Gastrocnemius medialis (tissue), 4 donors: ENCODE measurements at regions of chr18 and their contacts with region 1.

Region 1: GRCh38 chr18:49094979-49095632 is 144.3 kb upstream of the SMAD7 start:
- DNase-seq: no peak
- ATAC-seq: no peak
- H3K4me3 ChIP-seq: no peak overlapping the region
- H3K27ac ChIP-seq: no peak overlapping the region
- H3K4me1 ChIP-seq: no peaks in the 10 kb centered on the region
- H3K27me3 ChIP-seq: no peaks in the 10 kb centered on the region
- CTCF ChIP-seq: no peak
- POLR2A ChIP-seq: no peak

Region 2: GRCh38 chr18:49151482-49151881 is 56.4 kb after region 1 on chr18:
- in situ Hi-C with region 1: no loop called
- intact Hi-C with region 1: loop called (anchors 10 kb)
- DNase-seq: no peak
- ATAC-seq: no peak
- H3K4me3 ChIP-seq: no peak overlapping the region
- H3K27ac ChIP-seq: no peak overlapping the region
- H3K4me1 ChIP-seq: no peaks in the 10 kb centered on the region
- H3K27me3 ChIP-seq: no peaks in the 10 kb centered on the region
- CTCF ChIP-seq: no peak
- POLR2A ChIP-seq: no peak

Region 3: DNA sequence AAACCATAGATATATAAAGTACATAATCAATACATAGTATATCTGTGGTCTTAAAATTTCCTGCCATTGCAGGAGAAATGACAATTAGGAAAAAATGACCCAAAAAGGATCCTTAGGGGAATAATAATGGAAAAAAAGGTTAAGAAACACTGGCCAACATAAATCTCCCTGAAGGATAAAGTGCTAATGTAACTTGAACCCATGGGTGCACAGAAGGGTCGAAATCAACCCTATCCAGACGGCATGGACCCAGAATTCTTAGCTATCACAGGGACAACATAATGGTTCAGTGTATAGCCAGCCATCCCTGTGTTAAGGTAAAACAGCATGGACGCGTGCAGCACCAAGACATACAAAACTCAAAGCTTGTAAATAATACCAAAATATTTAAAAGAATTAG is 214.6 kb after region 1 on chr18:
- in situ Hi-C with region 1: no loop called
- intact Hi-C with region 1: no loop called
- DNase-seq: no peak
- ATAC-seq: no peak
- H3K4me3 ChIP-seq: no peak overlapping the region
- H3K27ac ChIP-seq: no peak overlapping the region
- H3K4me1 ChIP-seq: peaks cover 0 to 2% of the 10 kb centered on the region in 2 donors
- H3K27me3 ChIP-seq: no peaks in the 10 kb centered on the region
- CTCF ChIP-seq: no peak
- POLR2A ChIP-seq: no peak